Endothelial cell of umbilical vein (primary cell): ENCODE measurements at regions of chr7 and their contacts with region 1.

Region 1: GRCh38 chr7:17651926-17652385 is 288.3 kb downstream of the SNX13 start:
- DNase-seq: peak; percentile 37
- H3K4me3 ChIP-seq: no peak overlapping the region
- H3K27ac ChIP-seq: no peak overlapping the region
- H3K4me1 ChIP-seq: no peaks in the 10 kb centered on the region
- H3K27me3 ChIP-seq: no peaks in the 10 kb centered on the region
- CTCF ChIP-seq: no peak
- POLR2A ChIP-seq: no peak

Region 2: GRCh38 chr7:17640730-17641377 is 11.1 kb before region 1 on chr7:
- CTCF ChIA-PET with region 1: interaction called, 11 read pairs
- POLR2A ChIA-PET with region 1: no interaction called
- dilution Hi-C with region 1: no loop called
- intact Hi-C with region 1: no loop called
- DNase-seq: peak; percentile 33
- H3K4me3 ChIP-seq: no peak overlapping the region
- H3K27ac ChIP-seq: no peak overlapping the region
- H3K4me1 ChIP-seq: no peaks in the 10 kb centered on the region
- H3K27me3 ChIP-seq: no peaks in the 10 kb centered on the region
- CTCF ChIP-seq: peak; percentile 45 to 56
- POLR2A ChIP-seq: no peak